GM13976 (cell line): ENCODE measurements at regions of chr7 and their contacts with region 1.

Region 1: GRCh38 chr7:71752171-71752935 is 620.4 kb downstream of the GALNT17 start:
- DNase-seq: peak; percentile 84
- CTCF ChIP-seq: peak; percentile 72

Region 2: GRCh38 chr7:72493850-72494661 is 741.7 kb after region 1 on chr7:
- in situ Hi-C with region 1: loop called (anchors 25 kb)
- DNase-seq: peak; percentile 71
- CTCF ChIP-seq: peak; percentile 75

Region 3: GRCh38 chr7:72924733-72925545 is 1172.6 kb after region 1 on chr7 and contains the start of gene POM121:
- in situ Hi-C with region 1: loop called (anchors 25 kb)
- DNase-seq: peak; percentile 94
- CTCF ChIP-seq: no peak